ENCODE measurements at regions of chr18 and their contacts with region 1.

Region 1: DNA sequence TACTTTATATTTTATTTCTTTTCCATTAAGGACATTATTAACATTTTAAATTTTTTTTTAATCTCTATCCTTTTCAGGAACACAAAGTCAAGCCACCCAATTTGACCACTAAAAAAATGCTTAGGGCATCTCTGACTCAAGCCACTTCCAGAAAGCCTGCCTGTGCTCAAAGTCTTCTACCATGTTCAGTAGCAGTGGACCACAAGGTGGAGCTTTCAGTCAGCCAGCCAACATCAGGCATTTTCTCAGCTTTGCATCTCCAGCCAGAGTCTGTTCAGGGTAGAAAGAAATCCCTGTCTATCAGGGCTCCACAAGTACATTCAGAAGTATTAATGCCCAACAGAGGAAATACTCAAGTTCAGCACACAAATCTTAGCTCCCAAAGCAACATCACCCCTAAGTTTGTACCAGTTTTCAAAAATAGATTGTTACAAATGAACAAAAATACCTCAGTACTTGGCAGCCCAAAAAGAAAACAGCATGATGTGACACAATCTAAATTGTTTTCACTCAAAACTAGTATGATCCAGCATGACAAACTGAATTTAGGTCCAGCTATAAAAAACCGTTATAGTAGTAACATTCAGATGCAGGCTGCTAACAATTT is 37.6 kb downstream of the C18orf63 start:
- DNase-seq: peak; percentile 70
- ATAC-seq: peak; percentile 85
- H3K4me3 Mint-ChIP-seq: no peak overlapping the region
- H3K27ac Mint-ChIP-seq: no peak overlapping the region
- H3K4me1 Mint-ChIP-seq: peaks cover 18% of the 10 kb centered on the region
- H3K27me3 Mint-ChIP-seq: peaks cover 7% of the 10 kb centered on the region

Region 2: GRCh38 chr18:74342416-74343043 is 10.7 kb before region 1 on chr18:
- CTCF ChIA-PET with region 1: interaction called, 15 read pairs
- DNase-seq: no peak
- ATAC-seq: no peak
- H3K4me3 Mint-ChIP-seq: no peak overlapping the region
- H3K27ac Mint-ChIP-seq: no peak overlapping the region
- H3K4me1 Mint-ChIP-seq: peaks cover 2% of the 10 kb centered on the region
- H3K27me3 Mint-ChIP-seq: peaks cover 26% of the 10 kb centered on the region

Region 3: GRCh38 chr18:74495581-74496507 is 142.6 kb after region 1 on chr18 and contains the start of gene CNDP2:
- CTCF ChIA-PET with region 1: interaction called, 134 read pairs
- DNase-seq: peak; percentile 99
- ATAC-seq: peak; percentile 76
- H3K4me3 Mint-ChIP-seq: peak within 1 kb of the TSS; percentile 87
- H3K27ac Mint-ChIP-seq: peak within 1 kb of the TSS; percentile 100
- H3K4me1 Mint-ChIP-seq: peaks cover 40% of the 10 kb centered on the region
- H3K27me3 Mint-ChIP-seq: peaks cover 12% of the 10 kb centered on the region
- total RNA-seq, gene CNDP2: 141 to 176 TPM

Region 4: GRCh38 chr18:74551936-74552555 is 198.8 kb after region 1 on chr18:
- CTCF ChIA-PET with region 1: interaction called, 17 read pairs
- DNase-seq: peak; percentile 85
- ATAC-seq: peak; percentile 97
- H3K4me3 Mint-ChIP-seq: no peak overlapping the region
- H3K27ac Mint-ChIP-seq: no peak overlapping the region
- H3K4me1 Mint-ChIP-seq: peaks cover 2% of the 10 kb centered on the region
- H3K27me3 Mint-ChIP-seq: peaks cover 24% of the 10 kb centered on the region

Region 5: GRCh38 chr18:74623047-74623816 is 270.0 kb after region 1 on chr18:
- CTCF ChIA-PET with region 1: no interaction called
- DNase-seq: no peak
- ATAC-seq: no peak
- H3K4me3 Mint-ChIP-seq: no peak overlapping the region
- H3K27ac Mint-ChIP-seq: no peak overlapping the region
- H3K4me1 Mint-ChIP-seq: peaks cover 3% of the 10 kb centered on the region
- H3K27me3 Mint-ChIP-seq: no peaks in the 10 kb centered on the region

Region 6: DNA sequence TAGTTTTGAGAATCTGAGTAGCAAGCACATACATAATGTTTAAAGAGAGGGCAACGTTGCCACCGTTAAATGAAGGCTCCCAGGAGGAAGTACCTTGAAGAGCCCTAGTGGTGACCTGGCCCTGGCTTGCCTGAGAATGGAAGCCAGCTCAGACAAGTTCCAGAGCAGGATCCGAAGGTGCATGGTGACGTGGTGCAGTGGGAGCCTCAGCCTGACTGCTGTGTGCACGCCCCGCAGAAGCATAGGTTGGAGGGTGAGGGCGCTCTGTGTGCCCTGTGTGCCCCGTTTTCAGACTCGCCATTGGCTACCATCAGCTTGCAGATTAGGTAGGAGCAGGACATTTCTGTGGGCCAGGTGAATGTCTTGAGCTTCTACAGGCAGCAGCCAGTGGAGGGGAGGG is 312.6 kb after region 1 on chr18:
- CTCF ChIA-PET with region 1: no interaction called
- DNase-seq: no peak
- ATAC-seq: no peak
- H3K4me3 Mint-ChIP-seq: no peak overlapping the region
- H3K27ac Mint-ChIP-seq: no peak overlapping the region
- H3K4me1 Mint-ChIP-seq: peaks cover 3% of the 10 kb centered on the region
- H3K27me3 Mint-ChIP-seq: no peaks in the 10 kb centered on the region

Measured in activated CD8-positive, alpha-beta memory T cell treated with anti-CD3 and anti-CD28 coated beads, Interleukin-2, amount 10 ng/mL, durations not matched to agents 7 days and 5 days (primary cell).